GM12878 (cell line): ENCODE measurements at regions of chr6 and their contacts with region 1.

Region 1: GRCh38 chr6:28355743-28356665 is 6.3 kb downstream of the ZKSCAN3 start:
- DNase-seq: peak; percentile 55
- ATAC-seq: peak; percentile 93
- H3K4me3 ChIP-seq: peak overlapping the region; percentile 67; the same call in 1 of the 2 replicates
- H3K27ac ChIP-seq: peak overlapping the region; percentile 59
- H3K4me1 ChIP-seq: peaks cover 3% of the 10 kb centered on the region; the same call in 1 of the 2 replicates
- H3K27me3 ChIP-seq: no peaks in the 10 kb centered on the region
- CTCF ChIP-seq: peak; percentile 71 to 76 (median 72)
- EP300 ChIP-seq: no peak
- POLR2A ChIP-seq: no peak
- RAD21 ChIP-seq: peak; percentile 88

Region 2: GRCh38 chr6:28104392-28105244 is 251.4 kb before region 1 on chr6:
- CTCF ChIA-PET with region 1: interaction called, 4 read pairs
- POLR2A ChIA-PET with region 1: no interaction called
- RAD21 ChIA-PET with region 1: interaction called, 14 read pairs
- SMC1A ChIA-PET with region 1: interaction called, 7 read pairs
- in situ Hi-C with region 1: no loop called
- intact Hi-C with region 1: no loop called
- DNase-seq: peak; percentile 60
- ATAC-seq: peak; percentile 99
- H3K4me3 ChIP-seq: peak overlapping the region; percentile 71
- H3K27ac ChIP-seq: peak overlapping the region; percentile 72
- H3K4me1 ChIP-seq: no peaks in the 10 kb centered on the region
- H3K27me3 ChIP-seq: no peaks in the 10 kb centered on the region
- CTCF ChIP-seq: peak; percentile 47 to 80 (median 58)
- EP300 ChIP-seq: 0 out of 4 replicates have a peak, but pooled peaks of 1 of the 2 experiments have one; percentile 18
- POLR2A ChIP-seq: peak; percentile 98
- RAD21 ChIP-seq: 0 out of 2 replicates have a peak, but pooled peaks have one; percentile 28

Region 3: GRCh38 chr6:28212510-28213212 is 143.3 kb before region 1 on chr6:
- CTCF ChIA-PET with region 1: interaction called, 8 read pairs
- POLR2A ChIA-PET with region 1: interaction called, 3 read pairs
- RAD21 ChIA-PET with region 1: interaction called, 4 read pairs
- SMC1A ChIA-PET with region 1: no interaction called
- in situ Hi-C with region 1: no loop called
- intact Hi-C with region 1: loop called (anchors 5 kb)
- DNase-seq: peak; percentile 77
- ATAC-seq: peak; percentile 84
- H3K4me3 ChIP-seq: peak overlapping the region; percentile 75
- H3K27ac ChIP-seq: peak overlapping the region; percentile 48
- H3K4me1 ChIP-seq: peaks cover 16% of the 10 kb centered on the region
- H3K27me3 ChIP-seq: peaks cover 0 to 3% of the 10 kb centered on the region in 2 experiments; a peak in 2 of 4 replicates
- CTCF ChIP-seq: peak in 2 of 3 experiments; percentile 38 to 41; a peak in 4 of 6 replicates
- EP300 ChIP-seq: no peak; a peak in 1 of 4 replicates
- POLR2A ChIP-seq: no peak
- RAD21 ChIP-seq: peak; percentile 62

Region 4: DNA sequence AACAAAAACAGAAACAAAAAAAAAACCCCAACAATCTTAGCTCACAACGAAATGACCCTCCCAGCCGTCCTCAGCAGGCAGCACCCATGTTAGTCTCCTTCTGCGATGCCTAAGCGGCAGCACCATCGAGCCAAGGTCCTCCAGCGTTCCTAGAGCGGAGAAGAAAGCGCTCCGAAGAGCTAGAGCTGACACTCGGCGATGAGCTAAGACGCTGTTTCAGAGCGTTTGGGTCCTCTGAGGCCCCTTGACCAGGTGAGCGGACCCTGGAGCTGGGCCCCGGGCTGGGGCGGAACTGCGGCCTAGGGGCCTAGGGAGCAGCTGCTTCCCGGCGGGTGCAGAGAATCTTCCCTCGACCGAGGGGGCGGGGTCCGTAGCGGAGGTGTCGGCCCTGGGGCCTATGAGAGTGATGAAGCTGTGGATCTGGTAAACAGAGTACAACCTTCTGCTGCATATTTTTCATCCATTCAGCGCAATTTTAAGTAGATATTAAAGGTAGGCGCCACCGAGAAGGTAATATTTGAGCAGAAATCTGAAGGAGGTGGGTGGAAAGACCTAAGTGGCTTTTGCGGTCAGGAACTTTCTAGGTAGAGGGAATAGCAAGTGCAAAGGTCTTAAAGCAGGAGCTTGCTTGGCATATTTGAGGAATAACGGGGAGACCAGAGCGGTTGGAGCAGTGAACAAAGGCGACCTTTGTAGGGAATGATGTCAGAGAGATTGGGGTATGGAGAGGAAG is 88.9 kb before region 1 on chr6 and contains the start of gene ZSCAN26:
- CTCF ChIA-PET with region 1: interaction called, 13 read pairs
- POLR2A ChIA-PET with region 1: no interaction called
- RAD21 ChIA-PET with region 1: interaction called, 22 read pairs
- SMC1A ChIA-PET with region 1: interaction called, 19 read pairs
- in situ Hi-C with region 1: no loop called
- intact Hi-C with region 1: loop called (anchors 5 kb)
- DNase-seq: peak; percentile 70
- ATAC-seq: peak; percentile 98
- H3K4me3 ChIP-seq: peak within 1 kb of the TSS; percentile 96
- H3K27ac ChIP-seq: peak within 1 kb of the TSS; percentile 84
- H3K4me1 ChIP-seq: no peaks in the 10 kb centered on the region
- H3K27me3 ChIP-seq: no peaks in the 10 kb centered on the region
- CTCF ChIP-seq: no peak
- EP300 ChIP-seq: no peak
- POLR2A ChIP-seq: peak; percentile 82
- RAD21 ChIP-seq: 0 out of 2 replicates have a peak, but pooled peaks have one; percentile 4
- polyA plus RNA-seq, gene ZSCAN26: 4.6 to 5.4 TPM

Region 5: GRCh38 chr6:28383235-28384142 is 27.5 kb after region 1 on chr6:
- CTCF ChIA-PET with region 1: interaction called, 18 read pairs
- POLR2A ChIA-PET with region 1: interaction called, 3 read pairs
- RAD21 ChIA-PET with region 1: interaction called, 26 read pairs
- SMC1A ChIA-PET with region 1: interaction called, 11 read pairs
- in situ Hi-C with region 1: no loop called
- intact Hi-C with region 1: no loop called
- DNase-seq: no peak
- ATAC-seq: peak; percentile 97
- H3K4me3 ChIP-seq: peak overlapping the region; percentile 38; the same call in 1 of the 2 replicates
- H3K27ac ChIP-seq: peak overlapping the region; percentile 50; the same call in 1 of the 2 replicates
- H3K4me1 ChIP-seq: no peaks in the 10 kb centered on the region
- H3K27me3 ChIP-seq: no peaks in the 10 kb centered on the region
- CTCF ChIP-seq: peak; percentile 41 to 47 (median 42); a peak in 5 of 6 replicates
- EP300 ChIP-seq: peak; percentile 72 to 74; a peak in 2 of 4 replicates
- POLR2A ChIP-seq: peak; percentile 66
- RAD21 ChIP-seq: peak; percentile 49